Activated B cell treated with CpG ODN at 0.5 μM for 24 hours (primary cell): ENCODE measurements at regions of chr1 and their contacts with region 1.

Region 1: DNA sequence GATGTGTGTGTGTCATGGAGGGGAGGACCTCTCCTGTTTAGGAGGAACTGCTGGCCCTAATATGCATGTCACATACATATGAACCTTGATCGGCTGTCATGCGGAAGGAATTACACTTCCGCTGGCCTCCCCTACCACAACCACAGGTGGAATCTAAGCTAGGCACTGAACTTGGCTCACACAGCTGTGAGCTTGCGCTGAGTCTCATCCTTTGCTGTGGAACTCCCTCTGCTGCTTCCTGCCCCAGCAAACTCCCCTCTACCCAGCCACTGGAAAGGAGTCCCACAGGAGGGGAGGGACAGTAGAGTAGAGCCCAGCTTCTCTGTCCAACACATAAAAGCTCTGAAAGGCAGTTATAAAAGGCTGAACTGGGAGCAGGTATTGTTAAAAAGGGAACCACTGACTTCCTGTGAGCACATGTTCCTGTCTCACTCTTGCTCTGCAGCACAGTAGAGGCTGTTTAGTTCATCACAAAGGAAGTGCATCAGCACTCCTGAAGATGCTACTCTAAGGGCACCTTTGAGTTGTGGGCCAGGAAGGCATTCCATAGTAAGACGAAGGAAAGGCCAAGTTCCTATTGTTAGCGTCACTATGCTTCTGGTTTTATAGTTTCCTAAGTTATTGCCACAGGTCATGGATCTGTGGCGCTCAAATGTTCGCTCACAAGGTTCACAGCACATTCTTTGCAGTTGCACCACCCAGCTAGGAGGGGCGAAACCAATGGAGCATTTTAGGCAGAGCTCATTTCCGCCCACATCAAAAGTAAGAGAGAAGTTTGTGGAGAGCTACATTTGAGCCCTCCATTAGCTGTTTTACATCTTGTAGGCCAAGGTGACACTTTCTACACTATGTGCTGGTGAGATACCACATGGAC is 17.7 kb upstream of the PTPRC start:
- DNase-seq: peak; percentile 65
- ATAC-seq: peak; percentile 72
- H3K4me3 Mint-ChIP-seq: peak overlapping the region; percentile 79
- H3K27ac Mint-ChIP-seq: peak overlapping the region; percentile 97
- H3K4me1 Mint-ChIP-seq: peaks cover 86% of the 10 kb centered on the region
- H3K27me3 Mint-ChIP-seq: no peaks in the 10 kb centered on the region
- CTCF ChIP-seq: no peak

Region 2: GRCh38 chr1:198520524-198521254 is 100.5 kb before region 1 on chr1:
- CTCF ChIA-PET with region 1: interaction called, 8 read pairs
- POLR2A ChIA-PET with region 1: interaction called, 27 read pairs
- intact Hi-C with region 1: loop called (anchors 1 kb)
- DNase-seq: no peak
- ATAC-seq: peak; percentile 70
- H3K4me3 Mint-ChIP-seq: peak overlapping the region; percentile 69
- H3K27ac Mint-ChIP-seq: peak overlapping the region; percentile 81
- H3K4me1 Mint-ChIP-seq: peaks cover 63% of the 10 kb centered on the region
- H3K27me3 Mint-ChIP-seq: no peaks in the 10 kb centered on the region
- CTCF ChIP-seq: no peak

Region 3: DNA sequence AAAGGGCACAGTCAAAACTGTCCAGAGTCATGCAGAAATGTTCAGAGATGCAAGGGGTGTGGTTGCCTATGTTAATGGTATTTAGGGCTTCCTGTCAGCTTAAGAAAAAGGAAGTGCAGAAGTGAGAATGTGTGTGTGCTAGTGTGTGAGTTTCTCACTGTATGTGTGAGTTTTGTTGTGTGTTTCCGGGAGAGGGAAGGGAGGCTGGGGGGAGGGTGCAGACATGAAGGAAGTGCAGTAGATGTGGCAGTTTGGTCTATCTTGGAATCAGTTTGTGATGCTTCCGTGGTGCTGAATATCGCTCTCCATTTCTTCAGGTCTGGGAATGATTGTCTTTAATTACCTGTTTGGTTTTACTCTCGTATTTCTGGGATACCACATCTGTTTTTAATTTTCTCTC is 64.2 kb before region 1 on chr1:
- CTCF ChIA-PET with region 1: no interaction called
- POLR2A ChIA-PET with region 1: interaction called, 40 read pairs
- intact Hi-C with region 1: loop called (anchors 1 kb)
- DNase-seq: peak; percentile 26
- ATAC-seq: peak; percentile 93
- H3K4me3 Mint-ChIP-seq: peak overlapping the region; percentile 52
- H3K27ac Mint-ChIP-seq: peak overlapping the region; percentile 72
- H3K4me1 Mint-ChIP-seq: peaks cover 58% of the 10 kb centered on the region
- H3K27me3 Mint-ChIP-seq: no peaks in the 10 kb centered on the region
- CTCF ChIP-seq: no peak

Region 4: DNA sequence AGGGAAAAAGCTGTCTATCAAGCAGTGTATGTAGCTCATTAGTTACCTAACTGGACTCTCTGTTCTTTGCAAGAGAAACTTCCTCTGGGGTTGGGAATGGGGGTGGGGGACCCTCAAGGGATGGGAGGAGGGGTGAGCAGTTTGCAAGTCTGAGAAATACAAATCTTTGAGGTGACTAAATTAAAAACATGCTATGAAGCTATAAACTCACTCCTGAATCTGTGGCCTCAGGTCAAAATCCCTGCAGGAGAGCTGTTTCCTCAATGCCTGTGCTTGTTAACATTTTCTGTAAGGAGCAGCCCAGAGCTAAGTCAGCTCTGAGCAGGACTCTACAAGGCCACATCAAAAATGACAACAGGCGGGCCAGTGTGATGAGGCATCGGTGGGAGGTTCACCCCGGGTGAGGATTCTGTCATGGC is 15.2 kb before region 1 on chr1:
- CTCF ChIA-PET with region 1: interaction called, 4 read pairs
- POLR2A ChIA-PET with region 1: interaction called, 121 read pairs
- intact Hi-C with region 1: loop called (anchors 1 kb)
- DNase-seq: no peak
- ATAC-seq: no peak
- H3K4me3 Mint-ChIP-seq: no peak overlapping the region
- H3K27ac Mint-ChIP-seq: no peak overlapping the region
- H3K4me1 Mint-ChIP-seq: peaks cover 56% of the 10 kb centered on the region
- H3K27me3 Mint-ChIP-seq: no peaks in the 10 kb centered on the region
- CTCF ChIP-seq: no peak

Region 5: DNA sequence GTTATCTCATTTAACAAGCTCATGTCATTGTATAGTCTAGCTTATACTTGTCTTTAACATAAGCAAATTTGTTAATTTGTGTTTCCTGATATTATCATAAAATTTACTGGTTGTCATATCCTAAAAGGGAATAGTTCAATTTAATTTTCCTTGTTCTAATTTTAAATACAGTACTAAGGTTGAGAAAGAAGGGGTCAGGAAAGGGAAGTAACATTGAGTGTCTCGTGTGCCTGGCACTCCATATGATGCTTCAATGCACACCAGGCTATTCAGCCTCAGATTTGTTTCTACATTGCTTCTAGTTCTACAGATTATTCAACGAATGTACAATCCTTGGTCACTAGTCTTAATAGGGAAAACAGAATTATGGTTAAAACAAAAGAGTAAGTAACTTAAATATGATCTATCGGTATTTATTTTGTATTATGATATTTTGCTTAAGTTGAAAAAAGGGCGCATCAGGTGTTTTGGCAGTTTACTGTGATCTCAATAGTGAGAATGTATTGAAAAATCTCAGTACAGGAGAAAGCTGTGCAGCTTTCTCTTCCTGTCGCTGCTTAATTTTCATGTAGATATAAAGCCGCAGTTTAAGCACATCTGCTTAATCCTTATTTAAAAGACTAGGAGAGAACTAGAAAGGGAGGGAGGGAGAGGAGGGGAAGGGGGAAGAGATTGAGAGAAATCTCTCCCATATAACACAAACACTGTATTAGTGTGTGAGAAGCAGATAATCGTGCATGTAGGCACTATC is 30.6 kb after region 1 on chr1:
- CTCF ChIA-PET with region 1: interaction called, 3 read pairs
- POLR2A ChIA-PET with region 1: interaction called, 36 read pairs
- intact Hi-C with region 1: loop called (anchors 1 kb)
- DNase-seq: no peak
- ATAC-seq: peak; percentile 69
- H3K4me3 Mint-ChIP-seq: peak overlapping the region; percentile 68
- H3K27ac Mint-ChIP-seq: peak overlapping the region; percentile 90
- H3K4me1 Mint-ChIP-seq: peaks cover 83% of the 10 kb centered on the region
- H3K27me3 Mint-ChIP-seq: no peaks in the 10 kb centered on the region
- CTCF ChIP-seq: no peak

Region 6: DNA sequence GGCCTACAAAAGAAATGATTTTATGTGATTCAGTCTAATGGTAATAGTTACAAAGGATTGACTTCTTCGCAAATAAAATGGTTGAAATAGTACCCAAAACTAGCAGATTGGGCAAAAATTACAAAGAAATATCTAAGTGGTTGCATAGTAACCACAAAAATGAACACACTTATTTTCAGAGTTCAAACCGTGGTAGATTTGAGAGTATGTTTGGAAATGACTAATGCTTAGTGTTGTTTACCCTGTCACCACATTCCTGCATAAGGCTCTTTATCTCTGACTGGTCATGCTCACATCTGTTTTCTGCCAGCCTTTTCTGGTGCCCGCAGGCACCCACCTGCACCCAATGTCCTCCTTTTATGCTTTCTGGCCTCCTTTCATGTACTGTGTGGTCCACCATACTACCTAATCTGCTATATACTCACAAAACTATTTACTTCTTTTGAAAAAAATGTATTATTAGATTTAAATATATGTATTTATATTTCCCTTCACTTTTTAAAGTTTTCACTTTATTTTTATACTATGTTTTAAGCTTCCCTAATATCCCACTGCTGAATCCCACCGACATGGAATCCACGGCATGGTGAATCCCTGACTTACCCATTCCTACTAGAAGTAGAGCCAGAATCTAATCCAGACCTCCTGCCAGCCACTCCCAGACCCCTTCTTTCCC is 48.0 kb after region 1 on chr1:
- CTCF ChIA-PET with region 1: interaction called, 5 read pairs
- POLR2A ChIA-PET with region 1: interaction called, 32 read pairs
- intact Hi-C with region 1: loop called (anchors 1 kb)
- DNase-seq: no peak
- ATAC-seq: peak; percentile 57
- H3K4me3 Mint-ChIP-seq: peak overlapping the region; percentile 42
- H3K27ac Mint-ChIP-seq: peak overlapping the region; percentile 88
- H3K4me1 Mint-ChIP-seq: peaks cover 89% of the 10 kb centered on the region
- H3K27me3 Mint-ChIP-seq: no peaks in the 10 kb centered on the region
- CTCF ChIP-seq: no peak

Region 7: GRCh38 chr1:199089393-199090122 is 468.4 kb after region 1 on chr1:
- CTCF ChIA-PET with region 1: no interaction called
- POLR2A ChIA-PET with region 1: no interaction called
- intact Hi-C with region 1: no loop called
- DNase-seq: no peak
- ATAC-seq: peak; percentile 97
- H3K4me3 Mint-ChIP-seq: no peak overlapping the region
- H3K27ac Mint-ChIP-seq: peak overlapping the region; percentile 71
- H3K4me1 Mint-ChIP-seq: peaks cover 31% of the 10 kb centered on the region
- H3K27me3 Mint-ChIP-seq: no peaks in the 10 kb centered on the region
- CTCF ChIP-seq: no peak